Dorsolateral prefrontal cortex (tissue), 120 donors: ENCODE measurements at regions of chr19 and their contacts with region 1.

Region 1: GRCh38 chr19:41206926-41207750 is 11.9 kb upstream of the AXL start:
- DNase-seq: no peak
- H3K4me3 ChIP-seq: no peak overlapping the region
- H3K27ac ChIP-seq: peak overlapping the region in 5 of 59 donors; percentile 5 to 48 (median 15)
- H3K27me3 ChIP-seq: no peaks in the 10 kb centered on the region
- CTCF ChIP-seq: no peak

Region 2: GRCh38 chr19:40995355-40995754 is 211.8 kb before region 1 on chr19:
- intact Hi-C with region 1: no loop called
- DNase-seq: no peak
- H3K4me3 ChIP-seq: no peak overlapping the region
- H3K27ac ChIP-seq: no peak overlapping the region
- H3K27me3 ChIP-seq: peaks cover 0 to 6% (median 0%) of the 10 kb centered on the region in 45 donors
- CTCF ChIP-seq: no peak

Region 3: GRCh38 chr19:41263850-41264580 is 56.9 kb after region 1 on chr19 and contains the start of gene HNRNPUL1:
- intact Hi-C with region 1: loop called (anchors 1 to 2 kb)
- DNase-seq: peak; percentile 96 to 99 (median 98)
- H3K4me3 ChIP-seq: peak within 1 kb of the TSS; percentile 67 to 100 (median 97)
- H3K27ac ChIP-seq: peak within 1 kb of the TSS; percentile 87 to 100 (median 98)
- H3K27me3 ChIP-seq: no peaks in the 10 kb centered on the region
- CTCF ChIP-seq: peak in 40 of 56 donors; percentile 13 to 54 (median 32)
- total RNA-seq, gene HNRNPUL1: 92.7 to 156 (median 118) TPM

Region 4: GRCh38 chr19:41431426-41432386 is 224.6 kb after region 1 on chr19:
- intact Hi-C with region 1: loop called in 1 of 2 experiments (anchors 5 kb)
- DNase-seq: peak in 2 of 10 donors; percentile 17 to 26
- H3K4me3 ChIP-seq: no peak overlapping the region
- H3K27ac ChIP-seq: peak overlapping the region in 18 of 59 donors; percentile 3 to 49 (median 25)
- H3K27me3 ChIP-seq: no peaks in the 10 kb centered on the region
- CTCF ChIP-seq: peak in 36 of 56 donors; percentile 8 to 44 (median 26)

Region 5: DNA sequence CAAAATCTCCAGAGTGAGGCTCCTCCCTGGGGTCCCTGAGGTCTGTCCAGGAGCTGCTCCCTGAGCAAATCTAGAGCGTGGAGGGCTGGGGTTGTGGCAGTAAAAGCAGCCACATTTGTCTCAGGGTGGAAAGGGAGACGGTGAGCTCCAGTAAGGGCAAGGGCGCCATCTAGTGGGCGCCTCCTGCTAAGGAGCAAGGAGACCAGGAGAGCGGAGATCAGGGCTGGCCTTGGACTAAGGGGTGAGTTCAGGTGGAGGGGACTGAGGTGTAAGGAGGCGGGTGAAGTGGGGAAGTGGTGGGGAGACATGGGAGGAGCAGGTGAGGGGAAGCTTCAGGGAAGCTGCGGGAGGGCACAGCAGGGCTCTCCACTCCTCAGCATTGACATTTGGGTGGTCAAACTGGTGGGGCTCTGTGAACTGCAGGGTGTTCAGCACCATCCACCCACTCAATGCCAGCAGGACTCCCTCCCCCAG is 363.5 kb after region 1 on chr19:
- intact Hi-C with region 1: loop called in 1 of 2 experiments (anchors 10 kb)
- DNase-seq: peak in 9 of 10 donors; percentile 11 to 75 (median 58)
- H3K4me3 ChIP-seq: no peak overlapping the region
- H3K27ac ChIP-seq: no peak overlapping the region
- H3K27me3 ChIP-seq: peaks cover 0 to 73% (median 30%) of the 10 kb centered on the region in 45 donors
- CTCF ChIP-seq: peak in 55 of 56 donors; percentile 29 to 88 (median 73)

Region 6: DNA sequence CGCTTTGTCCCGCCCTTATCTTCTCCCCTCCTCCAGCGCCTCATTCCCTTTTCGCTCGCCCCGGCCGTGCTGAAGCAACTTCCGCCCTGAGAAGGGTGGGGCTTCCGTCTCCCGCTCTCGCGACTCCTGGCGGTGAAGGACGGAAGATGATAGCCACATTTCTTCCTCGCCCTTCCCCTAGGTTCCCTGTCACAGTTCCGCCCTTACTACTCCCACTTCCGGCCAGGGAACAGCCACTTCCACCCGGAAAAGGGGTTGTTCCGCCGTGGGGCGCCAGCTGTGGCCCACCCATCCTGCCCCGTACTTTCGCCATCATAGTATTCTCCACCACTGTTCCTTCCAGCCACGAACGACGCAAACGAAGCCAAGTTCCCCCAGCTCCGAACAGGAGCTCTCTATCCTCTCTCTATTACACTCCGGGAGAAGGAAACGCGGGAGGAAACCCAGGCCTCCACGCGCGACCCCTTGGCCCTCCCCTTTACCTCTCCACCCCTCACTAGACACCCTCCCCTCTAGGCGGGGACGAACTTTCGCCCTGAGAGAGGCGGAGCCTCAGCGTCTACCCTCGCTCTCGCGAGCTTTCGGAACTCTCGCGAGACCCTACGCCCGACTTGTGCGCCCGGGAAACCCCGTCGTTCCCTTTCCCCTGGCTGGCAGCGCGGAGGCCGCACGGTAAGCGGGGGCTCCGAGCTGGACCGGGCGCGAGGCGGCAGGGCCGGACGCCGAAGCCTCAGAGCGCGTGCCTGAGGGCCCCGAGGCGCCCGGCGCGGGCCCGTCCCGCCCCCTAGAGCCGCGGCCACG is 652.7 kb after region 1 on chr19 and contains the start of gene RPS19:
- intact Hi-C with region 1: no loop called
- DNase-seq: peak; percentile 97 to 99 (median 98)
- H3K4me3 ChIP-seq: peak within 1 kb of the TSS; percentile 51 to 99 (median 90)
- H3K27ac ChIP-seq: peak within 1 kb of the TSS; percentile 79 to 99 (median 96)
- H3K27me3 ChIP-seq: no peaks in the 10 kb centered on the region
- CTCF ChIP-seq: peak; percentile 44 to 89 (median 78)
- total RNA-seq, gene RPS19: 344 to 718 (median 462) TPM